HEK293 (cell line): ENCODE measurements at regions of chr13 and their contacts with region 1.

Region 1: GRCh38 chr13:79393564-79394249 is 12.3 kb downstream of the RBM26 start:
- H3K4me3 ChIP-seq: no peak overlapping the region
- H3K27ac ChIP-seq: no peak overlapping the region
- H3K4me1 ChIP-seq: no peaks in the 10 kb centered on the region
- CTCF ChIP-seq: no peak

Region 2: GRCh38 chr13:79382545-79383289 is 11.0 kb before region 1 on chr13:
- CTCF ChIA-PET with region 1: interaction called, 16 read pairs
- POLR2A ChIA-PET with region 1: no interaction called
- H3K4me3 ChIP-seq: no peak overlapping the region
- H3K27ac ChIP-seq: no peak overlapping the region
- H3K4me1 ChIP-seq: no peaks in the 10 kb centered on the region
- CTCF ChIP-seq: no peak

Region 3: GRCh38 chr13:79533781-79534400 is 140.2 kb after region 1 on chr13:
- CTCF ChIA-PET with region 1: no interaction called
- POLR2A ChIA-PET with region 1: no interaction called
- H3K4me3 ChIP-seq: no peak overlapping the region
- H3K27ac ChIP-seq: no peak overlapping the region
- H3K4me1 ChIP-seq: no peaks in the 10 kb centered on the region
- CTCF ChIP-seq: no peak